ENCODE measurements at regions of chr10 and their contacts with region 1.

Region 1: GRCh38 chr10:110354322-110354766 is 49.6 kb upstream of the SMNDC1 start:
- DNase-seq: peak; percentile 81
- H3K4me3 ChIP-seq: no peak overlapping the region
- H3K27ac ChIP-seq: peak overlapping the region in 2 of 4 donors; percentile 49 to 68
- H3K4me1 ChIP-seq: peaks cover 0 to 58% (median 45%) of the 10 kb centered on the region in 4 donors
- H3K27me3 ChIP-seq: no peaks in the 10 kb centered on the region
- CTCF ChIP-seq: peak; percentile 30 to 67 (median 56)
- EP300 ChIP-seq: no peak
- POLR2A ChIP-seq: no peak

Region 2: GRCh38 chr10:110311357-110311949 is 42.9 kb before region 1 on chr10:
- intact Hi-C with region 1: loop called (anchors 5 kb)
- DNase-seq: no peak
- H3K4me3 ChIP-seq: no peak overlapping the region
- H3K27ac ChIP-seq: no peak overlapping the region
- H3K4me1 ChIP-seq: peaks cover 0 to 14% (median 6%) of the 10 kb centered on the region in 4 donors
- H3K27me3 ChIP-seq: no peaks in the 10 kb centered on the region
- CTCF ChIP-seq: peak; percentile 58 to 75 (median 67)
- EP300 ChIP-seq: no peak
- POLR2A ChIP-seq: no peak

Region 3: GRCh38 chr10:110547139-110547761 is 192.9 kb after region 1 on chr10:
- intact Hi-C with region 1: loop called (anchors 1 kb)
- DNase-seq: no peak
- H3K4me3 ChIP-seq: no peak overlapping the region
- H3K27ac ChIP-seq: no peak overlapping the region
- H3K4me1 ChIP-seq: peaks cover 0 to 4% (median 0%) of the 10 kb centered on the region in 4 donors
- H3K27me3 ChIP-seq: no peaks in the 10 kb centered on the region
- CTCF ChIP-seq: peak; percentile 63 to 77 (median 70)
- EP300 ChIP-seq: no peak
- POLR2A ChIP-seq: no peak

Measured in sigmoid colon (tissue), 7 donors.